ENCODE measurements at regions of chr3 and their contacts with region 1.

Region 1: DNA sequence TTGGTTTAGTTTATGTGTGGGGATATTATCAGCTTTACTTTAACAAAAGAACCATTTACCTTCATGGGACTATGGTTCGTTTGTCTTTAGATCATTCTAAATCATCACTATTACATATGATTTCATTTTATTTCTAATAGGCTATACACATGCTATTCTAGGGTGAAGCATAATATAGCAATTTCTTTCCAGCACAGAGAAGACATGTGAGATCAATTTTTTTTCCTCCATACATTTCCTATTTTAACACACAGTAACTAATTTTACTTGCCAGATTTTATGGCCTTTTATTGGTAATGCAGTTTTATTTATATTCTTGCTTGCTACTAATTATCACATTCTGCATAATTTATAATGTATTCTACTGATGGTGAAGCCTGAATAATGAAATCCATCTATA is 287.1 kb downstream of the ROBO1 start:
- DNase-seq: no peak
- ATAC-seq: no peak
- H3K4me3 ChIP-seq: no peak overlapping the region
- H3K27ac ChIP-seq: no peak overlapping the region
- H3K4me1 ChIP-seq: no peaks in the 10 kb centered on the region
- H3K27me3 ChIP-seq: no peaks in the 10 kb centered on the region
- CTCF ChIP-seq: no peak
- POLR2A ChIP-seq: no peak
- RAD21 ChIP-seq: no peak

Region 2: DNA sequence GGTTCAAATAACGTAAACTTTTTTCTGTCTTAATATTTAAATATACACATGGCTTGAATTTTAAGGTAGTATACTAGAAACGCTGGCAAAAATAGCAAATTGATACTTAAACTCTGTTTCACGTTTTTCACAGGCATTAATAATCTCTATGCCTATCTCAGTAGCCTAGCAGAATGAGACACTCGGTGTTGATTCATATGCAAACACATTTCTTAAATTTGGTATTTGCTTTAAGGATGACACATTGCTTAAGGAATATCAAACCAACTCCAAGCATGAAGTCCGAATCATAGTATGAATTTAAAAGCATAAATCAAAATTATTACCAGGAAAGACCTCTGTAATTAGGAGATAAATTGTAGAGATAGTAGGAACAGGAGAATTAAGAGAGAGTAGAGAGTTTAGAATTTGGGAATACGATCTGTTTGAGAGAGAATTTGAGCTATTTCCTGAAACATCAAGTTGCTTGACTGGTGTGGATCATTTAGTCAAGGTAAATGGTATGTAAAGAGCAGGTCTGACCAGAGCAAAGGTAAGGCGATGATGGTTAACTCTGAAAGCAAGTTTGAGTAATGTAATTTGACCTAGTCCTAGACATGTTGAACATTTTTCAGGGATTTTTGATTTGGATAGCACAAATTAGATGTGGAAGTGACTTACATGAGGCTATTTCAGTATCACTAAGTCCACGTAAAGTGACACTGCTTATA is 51.0 kb after region 1 on chr3:
- CTCF ChIA-PET with region 1: no interaction called
- POLR2A ChIA-PET with region 1: no interaction called
- dilution Hi-C with region 1: no loop called
- in situ Hi-C with region 1: no loop called
- intact Hi-C with region 1: no loop called
- DNase-seq: no peak
- ATAC-seq: no peak
- H3K4me3 ChIP-seq: no peak overlapping the region
- H3K27ac ChIP-seq: no peak overlapping the region
- H3K4me1 ChIP-seq: no peaks in the 10 kb centered on the region
- H3K27me3 ChIP-seq: no peaks in the 10 kb centered on the region
- CTCF ChIP-seq: no peak
- POLR2A ChIP-seq: no peak
- RAD21 ChIP-seq: no peak

Region 3: GRCh38 chr3:79543218-79543982 is 62.7 kb after region 1 on chr3:
- CTCF ChIA-PET with region 1: no interaction called
- POLR2A ChIA-PET with region 1: no interaction called
- dilution Hi-C with region 1: no loop called
- in situ Hi-C with region 1: no loop called
- intact Hi-C with region 1: loop called (anchors 10 kb)
- DNase-seq: no peak
- ATAC-seq: no peak
- H3K4me3 ChIP-seq: no peak overlapping the region
- H3K27ac ChIP-seq: no peak overlapping the region
- H3K4me1 ChIP-seq: no peaks in the 10 kb centered on the region
- H3K27me3 ChIP-seq: no peaks in the 10 kb centered on the region
- CTCF ChIP-seq: no peak
- POLR2A ChIP-seq: no peak
- RAD21 ChIP-seq: no peak

Region 4: GRCh38 chr3:79564192-79564591 is 83.4 kb after region 1 on chr3:
- CTCF ChIA-PET with region 1: no interaction called
- POLR2A ChIA-PET with region 1: no interaction called
- dilution Hi-C with region 1: no loop called
- in situ Hi-C with region 1: no loop called
- intact Hi-C with region 1: no loop called
- DNase-seq: no peak
- ATAC-seq: no peak
- H3K4me3 ChIP-seq: no peak overlapping the region
- H3K27ac ChIP-seq: no peak overlapping the region
- H3K4me1 ChIP-seq: no peaks in the 10 kb centered on the region
- H3K27me3 ChIP-seq: no peaks in the 10 kb centered on the region
- CTCF ChIP-seq: no peak
- POLR2A ChIP-seq: no peak
- RAD21 ChIP-seq: no peak

Region 5: DNA sequence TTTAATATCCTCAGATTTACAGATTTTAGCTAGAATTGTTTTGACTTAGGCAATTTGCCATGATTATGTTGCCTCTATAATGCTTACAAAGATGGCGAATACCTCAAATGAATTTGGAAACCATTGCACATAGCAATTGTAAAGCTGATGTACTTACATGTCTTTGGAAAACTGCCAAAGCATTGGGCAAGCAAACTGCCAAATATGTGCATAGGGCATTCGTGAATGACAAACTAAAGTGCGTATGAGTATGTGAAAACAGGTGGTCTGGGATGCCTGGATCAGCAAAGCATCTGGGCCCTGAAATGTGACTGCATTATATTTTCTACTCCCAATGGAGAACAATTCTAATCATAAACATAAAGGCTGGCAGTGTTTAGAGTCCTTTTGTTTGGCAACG is 732.3 kb after region 1 on chr3:
- CTCF ChIA-PET with region 1: no interaction called
- POLR2A ChIA-PET with region 1: no interaction called
- dilution Hi-C with region 1: no loop called
- in situ Hi-C with region 1: no loop called
- intact Hi-C with region 1: no loop called
- DNase-seq: no peak
- ATAC-seq: no peak
- H3K4me3 ChIP-seq: no peak overlapping the region
- H3K27ac ChIP-seq: no peak overlapping the region
- H3K4me1 ChIP-seq: no peaks in the 10 kb centered on the region
- H3K27me3 ChIP-seq: no peaks in the 10 kb centered on the region
- CTCF ChIP-seq: no peak
- POLR2A ChIP-seq: no peak
- RAD21 ChIP-seq: no peak